Endothelial cell of umbilical vein (primary cell): ENCODE measurements at regions of chr20 and their contacts with region 1.

Region 1: GRCh38 chr20:35092524-35093266 is at the start of gene TRPC4AP:
- DNase-seq: peak; percentile 94
- H3K4me3 ChIP-seq: peak within 1 kb of the TSS; percentile 46 to 98 (median 66)
- H3K27ac ChIP-seq: peak within 1 kb of the TSS; percentile 88
- H3K4me1 ChIP-seq: peaks cover 42% of the 10 kb centered on the region
- H3K27me3 ChIP-seq: no peaks in the 10 kb centered on the region
- CTCF ChIP-seq: peak; percentile 97 to 100
- POLR2A ChIP-seq: peak; percentile 94
- total RNA-seq, gene TRPC4AP: 88.3 and 89.0 TPM in 2 replicates

Region 2: DNA sequence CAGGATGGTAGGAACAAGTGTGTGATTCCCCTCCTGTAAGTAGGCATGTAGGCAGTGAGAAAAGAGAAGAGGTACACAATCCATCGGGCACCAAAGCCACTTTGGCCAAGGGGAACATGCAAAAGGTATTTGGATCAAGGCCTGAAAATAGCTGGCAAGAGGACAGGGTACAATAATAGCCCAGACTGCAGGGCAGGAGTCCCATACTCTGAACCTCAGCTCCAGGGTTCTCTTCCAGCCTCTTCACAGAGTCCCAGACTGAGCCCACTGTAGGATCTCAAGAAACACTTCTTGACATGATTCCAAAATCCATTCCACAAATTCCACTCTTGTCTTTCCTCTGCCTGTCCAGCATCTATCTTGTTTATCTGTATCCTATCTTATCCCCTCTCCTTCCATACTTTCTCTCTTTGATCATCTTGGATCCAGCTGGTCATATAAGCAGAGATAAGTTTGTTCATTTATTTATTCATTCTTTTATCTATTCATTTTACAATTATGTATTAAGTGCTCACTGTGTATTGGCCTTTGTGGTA is 196.5 kb before region 1 on chr20:
- CTCF ChIA-PET with region 1: no interaction called
- POLR2A ChIA-PET with region 1: no interaction called
- dilution Hi-C with region 1: no loop called
- intact Hi-C with region 1: no loop called
- DNase-seq: no peak
- H3K4me3 ChIP-seq: no peak overlapping the region
- H3K27ac ChIP-seq: no peak overlapping the region
- H3K4me1 ChIP-seq: peaks cover 5% of the 10 kb centered on the region
- H3K27me3 ChIP-seq: no peaks in the 10 kb centered on the region
- CTCF ChIP-seq: no peak
- POLR2A ChIP-seq: no peak

Region 3: DNA sequence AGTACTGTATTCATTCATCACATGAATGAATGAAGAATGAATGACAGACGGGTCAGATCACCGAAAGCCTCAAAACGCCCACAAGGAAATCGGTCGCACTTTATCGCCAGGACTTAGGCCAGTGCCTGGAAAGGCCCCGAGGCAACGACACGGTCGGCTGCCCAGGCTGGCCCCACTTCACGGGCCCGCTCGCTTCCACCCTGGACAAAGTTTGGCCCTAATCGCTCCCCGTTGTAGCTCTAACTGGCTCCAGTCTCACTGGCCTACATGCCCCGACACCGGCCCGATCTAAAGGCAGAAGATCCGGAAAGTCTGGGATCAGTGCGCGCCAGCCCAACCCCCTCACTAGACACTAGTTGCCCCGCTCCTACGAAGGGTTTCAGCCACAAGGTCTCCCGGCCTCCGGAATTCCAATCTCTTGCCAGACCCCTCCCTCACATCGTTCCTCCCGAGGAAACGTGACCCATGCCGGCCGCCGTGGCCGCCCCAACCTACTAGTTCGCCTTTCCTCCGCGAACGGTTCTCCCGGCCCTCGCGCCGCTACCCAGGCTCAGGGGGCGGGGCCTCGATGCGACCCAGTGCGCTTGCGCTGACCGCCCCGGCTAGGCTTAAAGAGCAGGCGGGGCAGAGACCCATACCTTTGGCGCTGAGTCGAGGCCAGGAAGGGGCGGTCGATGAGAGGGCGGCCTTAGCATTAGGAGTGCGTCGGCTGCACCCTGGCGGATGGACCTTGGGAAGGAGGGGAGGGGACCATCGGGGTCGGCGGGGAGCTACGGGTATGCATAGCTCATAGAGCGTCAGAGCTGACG is 137.3 kb before region 1 on chr20 and contains the starts of genes GSS and MYH7B:
- CTCF ChIA-PET with region 1: interaction called, 3 read pairs
- POLR2A ChIA-PET with region 1: no interaction called
- dilution Hi-C with region 1: no loop called
- intact Hi-C with region 1: loop called (anchors 2 kb)
- DNase-seq: peak; percentile 99
- H3K4me3 ChIP-seq: peak within 1 kb of the TSS; percentile 58 to 84 (median 70)
- H3K27ac ChIP-seq: peak within 1 kb of the TSS; percentile 65
- H3K4me1 ChIP-seq: peaks cover 17% of the 10 kb centered on the region
- H3K27me3 ChIP-seq: no peaks in the 10 kb centered on the region
- CTCF ChIP-seq: peak; percentile 34 to 52
- POLR2A ChIP-seq: peak; percentile 56
- total RNA-seq, gene GSS: 46.9 and 47.9 TPM in 2 replicates
- total RNA-seq, gene MYH7B: 0.07 TPM in 1 of 2 replicates, not detected in the other

Region 4: DNA sequence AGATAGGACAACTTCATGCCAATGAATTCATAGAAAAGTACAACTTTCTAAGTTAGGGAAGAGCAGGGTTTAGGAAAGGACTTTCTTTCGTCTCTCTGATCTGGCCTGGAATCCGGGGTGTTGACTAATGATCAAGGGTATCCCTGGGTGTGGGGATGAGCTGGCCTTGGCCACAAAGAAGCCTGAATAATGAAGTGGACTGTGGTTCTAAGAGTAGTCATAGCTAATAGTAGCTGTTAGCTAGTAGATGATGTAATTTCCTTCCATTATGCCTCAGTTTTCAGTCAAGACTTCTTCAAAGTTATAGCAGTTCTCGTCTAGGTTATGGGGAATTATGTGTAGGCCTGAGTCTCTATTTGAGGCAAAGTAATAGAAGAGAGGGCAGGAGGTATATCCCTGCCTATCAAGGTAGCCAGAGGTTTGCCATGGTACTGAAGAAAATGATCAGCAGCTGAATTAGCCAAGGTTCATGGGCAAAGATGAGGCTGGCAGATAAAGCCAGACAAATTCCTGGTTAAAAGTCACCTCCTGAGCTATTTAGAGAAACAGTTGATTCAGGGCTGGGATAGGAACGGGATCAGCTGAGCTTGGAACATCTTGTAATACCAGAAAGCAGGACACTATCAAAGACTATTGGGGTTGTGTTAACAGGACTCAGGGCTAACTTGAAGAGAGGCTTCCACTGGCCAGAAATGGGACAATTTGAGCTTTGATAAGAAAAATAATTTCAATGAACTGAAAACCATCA is 18.6 kb after region 1 on chr20:
- CTCF ChIA-PET with region 1: interaction called, 46 read pairs
- POLR2A ChIA-PET with region 1: interaction called, 4 read pairs
- dilution Hi-C with region 1: no loop called
- intact Hi-C with region 1: no loop called
- DNase-seq: peak; percentile 62
- H3K4me3 ChIP-seq: no peak overlapping the region
- H3K27ac ChIP-seq: peak overlapping the region; percentile 91
- H3K4me1 ChIP-seq: peaks cover 16% of the 10 kb centered on the region
- H3K27me3 ChIP-seq: no peaks in the 10 kb centered on the region
- CTCF ChIP-seq: no peak
- POLR2A ChIP-seq: no peak

Region 5: GRCh38 chr20:35146920-35147574 is 54.4 kb after region 1 on chr20 and contains the start of gene EDEM2:
- CTCF ChIA-PET with region 1: interaction called, 277 read pairs
- POLR2A ChIA-PET with region 1: no interaction called
- dilution Hi-C with region 1: no loop called
- intact Hi-C with region 1: loop called (anchors 2 kb)
- DNase-seq: peak; percentile 93
- H3K4me3 ChIP-seq: peak within 1 kb of the TSS; percentile 49 to 85 (median 82)
- H3K27ac ChIP-seq: peak within 1 kb of the TSS; percentile 81
- H3K4me1 ChIP-seq: peaks cover 24% of the 10 kb centered on the region
- H3K27me3 ChIP-seq: no peaks in the 10 kb centered on the region
- CTCF ChIP-seq: peak in 1 of 2 donors; percentile 10
- POLR2A ChIP-seq: peak; percentile 75
- total RNA-seq, gene EDEM2: 37.5 and 39.5 TPM in 2 replicates

Region 6: GRCh38 chr20:35207950-35208611 is 115.4 kb after region 1 on chr20:
- CTCF ChIA-PET with region 1: interaction called, 123 read pairs
- POLR2A ChIA-PET with region 1: interaction called, 3 read pairs
- dilution Hi-C with region 1: no loop called
- intact Hi-C with region 1: loop called (anchors 1 kb)
- DNase-seq: peak; percentile 92
- H3K4me3 ChIP-seq: peak overlapping the region in 1 of 3 experiments; percentile 42
- H3K27ac ChIP-seq: peak overlapping the region; percentile 53
- H3K4me1 ChIP-seq: peaks cover 6% of the 10 kb centered on the region
- H3K27me3 ChIP-seq: no peaks in the 10 kb centered on the region
- CTCF ChIP-seq: peak; percentile 62 to 66
- POLR2A ChIP-seq: peak; percentile 16

Region 7: GRCh38 chr20:35277531-35278395 is 185.1 kb after region 1 on chr20 and contains the start of gene MMP24OS:
- CTCF ChIA-PET with region 1: interaction called, 118 read pairs
- POLR2A ChIA-PET with region 1: no interaction called
- dilution Hi-C with region 1: no loop called
- intact Hi-C with region 1: no loop called
- DNase-seq: peak; percentile 77
- H3K4me3 ChIP-seq: peak within 1 kb of the TSS; percentile 43 to 80 (median 79)
- H3K27ac ChIP-seq: peak within 1 kb of the TSS; percentile 89
- H3K4me1 ChIP-seq: peaks cover 7% of the 10 kb centered on the region
- H3K27me3 ChIP-seq: no peaks in the 10 kb centered on the region
- CTCF ChIP-seq: peak in 1 of 2 donors; percentile 31
- POLR2A ChIP-seq: peak; percentile 93
- total RNA-seq, gene MMP24OS: 52.8 and 55.6 TPM in 2 replicates